Activated CD4-positive, alpha-beta T cell treated with anti-CD3 and anti-CD28 coated beads for 36 hours (primary cell): ENCODE measurements at regions of chr17 and their contacts with region 1.

Region 1: GRCh38 chr17:74961657-74962490 is 10.7 kb downstream of the HID1 start:
- DNase-seq: peak; percentile 92
- ATAC-seq: peak; percentile 79
- H3K4me3 Mint-ChIP-seq: no peak overlapping the region
- H3K27ac Mint-ChIP-seq: no peak overlapping the region
- H3K4me1 Mint-ChIP-seq: peaks cover 6% of the 10 kb centered on the region
- H3K27me3 Mint-ChIP-seq: no peaks in the 10 kb centered on the region

Region 2: GRCh38 chr17:74373838-74374606 is 587.9 kb before region 1 on chr17:
- CTCF ChIA-PET with region 1: no interaction called
- POLR2A ChIA-PET with region 1: no interaction called
- intact Hi-C with region 1: no loop called
- DNase-seq: no peak
- ATAC-seq: no peak
- H3K4me3 Mint-ChIP-seq: no peak overlapping the region
- H3K27ac Mint-ChIP-seq: no peak overlapping the region
- H3K4me1 Mint-ChIP-seq: peaks cover 6% of the 10 kb centered on the region
- H3K27me3 Mint-ChIP-seq: peaks cover 2% of the 10 kb centered on the region

Region 3: DNA sequence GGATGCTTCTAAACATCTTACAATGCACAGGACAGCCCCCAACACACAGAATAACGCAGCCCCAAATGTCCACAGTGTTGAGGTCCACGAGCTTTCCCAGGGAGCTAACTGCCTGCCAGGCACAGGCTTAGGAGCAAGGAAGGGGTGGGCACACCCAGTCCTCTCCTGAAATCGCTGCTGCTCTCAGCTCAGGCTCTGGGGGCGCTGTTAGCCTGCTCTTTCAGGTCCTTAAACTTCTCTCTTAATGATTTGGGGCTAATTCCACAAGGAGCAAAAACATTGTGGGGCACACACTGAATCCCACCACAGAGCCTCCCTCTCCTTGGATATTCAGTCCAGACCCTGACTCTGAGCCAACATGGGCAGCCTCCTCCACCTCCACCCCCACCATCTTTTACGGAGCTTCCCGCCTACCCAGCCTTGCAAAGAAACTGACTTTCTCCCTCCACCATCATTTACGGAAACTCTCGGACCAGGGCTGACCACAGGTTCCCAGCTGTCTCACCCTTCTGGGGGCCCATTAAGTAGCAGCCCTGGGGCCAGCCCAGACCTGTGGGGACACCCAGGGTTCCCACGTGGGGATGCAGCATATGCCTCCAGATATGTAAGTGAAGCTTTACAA is 395.6 kb before region 1 on chr17:
- CTCF ChIA-PET with region 1: no interaction called
- POLR2A ChIA-PET with region 1: no interaction called
- intact Hi-C with region 1: no loop called
- DNase-seq: peak; percentile 66
- ATAC-seq: peak; percentile 47
- H3K4me3 Mint-ChIP-seq: no peak overlapping the region
- H3K27ac Mint-ChIP-seq: no peak overlapping the region
- H3K4me1 Mint-ChIP-seq: peaks cover 23% of the 10 kb centered on the region
- H3K27me3 Mint-ChIP-seq: peaks cover 8% of the 10 kb centered on the region

Region 4: DNA sequence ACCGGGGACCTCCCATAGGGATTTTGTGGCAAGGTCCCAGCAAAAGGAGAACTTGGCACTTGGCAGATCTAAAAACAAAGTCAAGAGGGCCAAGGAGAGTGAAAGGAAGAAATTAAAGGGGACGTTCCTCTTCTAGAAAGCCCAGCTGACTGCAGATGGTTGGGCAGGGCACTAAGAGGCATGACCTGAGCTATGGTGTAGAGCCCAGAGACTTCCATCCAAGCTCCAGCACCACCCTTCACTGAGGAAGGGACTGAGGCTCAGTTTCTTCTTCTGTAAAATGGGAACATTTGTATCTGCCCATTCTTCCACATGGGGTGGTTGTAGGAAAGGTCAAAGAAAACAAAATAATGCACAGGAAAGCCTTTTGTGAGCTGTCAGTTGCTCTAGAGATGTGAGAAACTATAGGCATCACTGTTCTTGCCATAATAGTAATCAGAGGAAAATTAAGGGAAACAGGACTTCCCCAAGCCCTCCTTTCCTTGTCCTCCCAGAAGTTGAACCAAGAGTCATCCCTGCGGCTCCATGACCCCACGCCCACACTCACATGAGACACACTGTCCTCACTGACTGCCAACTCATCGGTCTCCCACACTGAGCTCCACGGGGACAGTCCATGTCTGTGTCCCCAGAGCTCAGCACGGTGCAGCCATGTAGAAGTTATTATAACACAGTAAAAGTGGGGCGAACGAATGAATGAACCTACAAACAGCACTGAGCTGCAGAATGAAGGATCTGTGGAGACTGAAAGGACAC is 259.6 kb before region 1 on chr17:
- CTCF ChIA-PET with region 1: no interaction called
- POLR2A ChIA-PET with region 1: no interaction called
- intact Hi-C with region 1: no loop called
- DNase-seq: no peak
- ATAC-seq: no peak
- H3K4me3 Mint-ChIP-seq: no peak overlapping the region
- H3K27ac Mint-ChIP-seq: no peak overlapping the region
- H3K4me1 Mint-ChIP-seq: no peaks in the 10 kb centered on the region
- H3K27me3 Mint-ChIP-seq: peaks cover 2% of the 10 kb centered on the region

Region 5: GRCh38 chr17:74748529-74749365 is 213.1 kb before region 1 on chr17 and contains the start of gene NHERF1:
- CTCF ChIA-PET with region 1: interaction called, 5 read pairs
- POLR2A ChIA-PET with region 1: no interaction called
- intact Hi-C with region 1: loop called in 1 of 2 experiments (anchors 2 kb)
- DNase-seq: peak; percentile 97
- ATAC-seq: peak; percentile 90
- H3K4me3 Mint-ChIP-seq: peak within 1 kb of the TSS; percentile 98
- H3K27ac Mint-ChIP-seq: peak within 1 kb of the TSS; percentile 91
- H3K4me1 Mint-ChIP-seq: peaks cover 56% of the 10 kb centered on the region
- H3K27me3 Mint-ChIP-seq: no peaks in the 10 kb centered on the region
- total RNA-seq, gene NHERF1: 115 to 170 TPM

Region 6: GRCh38 chr17:74945543-74945942 is 16.3 kb before region 1 on chr17:
- CTCF ChIA-PET with region 1: interaction called, 18 read pairs
- POLR2A ChIA-PET with region 1: no interaction called
- intact Hi-C with region 1: no loop called
- DNase-seq: no peak
- ATAC-seq: no peak
- H3K4me3 Mint-ChIP-seq: no peak overlapping the region
- H3K27ac Mint-ChIP-seq: no peak overlapping the region
- H3K4me1 Mint-ChIP-seq: peaks cover 2% of the 10 kb centered on the region
- H3K27me3 Mint-ChIP-seq: peaks cover 14% of the 10 kb centered on the region

Region 7: GRCh38 chr17:74994476-74994875 is 32.6 kb after region 1 on chr17:
- CTCF ChIA-PET with region 1: interaction called, 28 read pairs
- POLR2A ChIA-PET with region 1: no interaction called
- intact Hi-C with region 1: no loop called
- DNase-seq: no peak
- ATAC-seq: no peak
- H3K4me3 Mint-ChIP-seq: no peak overlapping the region
- H3K27ac Mint-ChIP-seq: no peak overlapping the region
- H3K4me1 Mint-ChIP-seq: peaks cover 3% of the 10 kb centered on the region
- H3K27me3 Mint-ChIP-seq: no peaks in the 10 kb centered on the region

Region 8: GRCh38 chr17:75024686-75025397 is 63.0 kb after region 1 on chr17:
- CTCF ChIA-PET with region 1: interaction called, 10 read pairs
- POLR2A ChIA-PET with region 1: no interaction called
- intact Hi-C with region 1: loop called in 1 of 2 experiments (anchors 5 kb)
- DNase-seq: peak; percentile 64
- ATAC-seq: peak; percentile 76
- H3K4me3 Mint-ChIP-seq: peak overlapping the region; percentile 17
- H3K27ac Mint-ChIP-seq: peak overlapping the region; percentile 56
- H3K4me1 Mint-ChIP-seq: peaks cover 12% of the 10 kb centered on the region
- H3K27me3 Mint-ChIP-seq: no peaks in the 10 kb centered on the region

Region 9: GRCh38 chr17:75131280-75132017 is 169.6 kb after region 1 on chr17 and contains the start of gene NT5C:
- CTCF ChIA-PET with region 1: interaction called, 8 read pairs
- POLR2A ChIA-PET with region 1: interaction called, 3 read pairs
- intact Hi-C with region 1: loop called in 1 of 2 experiments (anchors 5 kb)
- DNase-seq: peak; percentile 84
- ATAC-seq: peak; percentile 82
- H3K4me3 Mint-ChIP-seq: peak within 1 kb of the TSS; percentile 83
- H3K27ac Mint-ChIP-seq: peak within 1 kb of the TSS; percentile 90
- H3K4me1 Mint-ChIP-seq: peaks cover 11% of the 10 kb centered on the region
- H3K27me3 Mint-ChIP-seq: no peaks in the 10 kb centered on the region
- total RNA-seq, gene NT5C: 51.7 to 61.5 TPM

Region 10: DNA sequence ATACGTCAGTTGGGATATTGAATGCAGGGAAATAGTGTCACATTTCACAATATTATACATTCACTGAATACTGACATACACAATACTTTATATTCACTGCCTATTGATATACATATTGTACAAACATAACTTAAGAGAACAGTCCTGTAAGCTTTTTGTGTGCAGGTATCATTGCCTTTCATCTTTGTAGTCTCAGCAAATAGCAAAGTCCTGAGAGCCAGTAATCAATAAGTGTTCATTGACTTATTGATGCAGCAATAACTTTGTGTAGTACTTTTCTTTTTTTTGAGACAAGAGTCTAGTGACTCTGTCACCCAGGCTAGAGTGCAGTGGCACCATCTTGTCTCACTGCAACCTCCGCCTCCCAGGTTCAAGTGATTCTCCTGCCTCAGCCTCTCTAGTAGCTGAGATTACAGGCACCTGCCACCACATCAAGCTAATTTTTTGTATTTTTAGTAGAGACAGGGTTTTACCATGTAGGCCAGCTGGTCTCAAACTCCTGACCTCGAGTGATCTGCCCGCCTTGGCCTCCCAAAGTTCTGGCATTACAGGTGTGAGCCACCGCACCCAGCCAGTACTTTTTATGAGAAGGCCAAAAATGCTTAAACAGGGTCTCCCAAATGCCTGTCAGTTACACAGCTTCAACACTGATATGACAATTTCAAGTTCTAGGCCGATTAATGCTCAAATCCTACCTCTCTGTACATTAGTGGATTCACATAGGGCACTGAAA is 238.2 kb after region 1 on chr17:
- CTCF ChIA-PET with region 1: interaction called, 38 read pairs
- POLR2A ChIA-PET with region 1: interaction called, 8 read pairs
- intact Hi-C with region 1: loop called (anchors 1 to 5 kb)
- DNase-seq: no peak
- ATAC-seq: no peak
- H3K4me3 Mint-ChIP-seq: no peak overlapping the region
- H3K27ac Mint-ChIP-seq: no peak overlapping the region
- H3K4me1 Mint-ChIP-seq: peaks cover 8% of the 10 kb centered on the region
- H3K27me3 Mint-ChIP-seq: no peaks in the 10 kb centered on the region